ENCODE measurements at regions of chr17 and their contacts with region 1.

Region 1: DNA sequence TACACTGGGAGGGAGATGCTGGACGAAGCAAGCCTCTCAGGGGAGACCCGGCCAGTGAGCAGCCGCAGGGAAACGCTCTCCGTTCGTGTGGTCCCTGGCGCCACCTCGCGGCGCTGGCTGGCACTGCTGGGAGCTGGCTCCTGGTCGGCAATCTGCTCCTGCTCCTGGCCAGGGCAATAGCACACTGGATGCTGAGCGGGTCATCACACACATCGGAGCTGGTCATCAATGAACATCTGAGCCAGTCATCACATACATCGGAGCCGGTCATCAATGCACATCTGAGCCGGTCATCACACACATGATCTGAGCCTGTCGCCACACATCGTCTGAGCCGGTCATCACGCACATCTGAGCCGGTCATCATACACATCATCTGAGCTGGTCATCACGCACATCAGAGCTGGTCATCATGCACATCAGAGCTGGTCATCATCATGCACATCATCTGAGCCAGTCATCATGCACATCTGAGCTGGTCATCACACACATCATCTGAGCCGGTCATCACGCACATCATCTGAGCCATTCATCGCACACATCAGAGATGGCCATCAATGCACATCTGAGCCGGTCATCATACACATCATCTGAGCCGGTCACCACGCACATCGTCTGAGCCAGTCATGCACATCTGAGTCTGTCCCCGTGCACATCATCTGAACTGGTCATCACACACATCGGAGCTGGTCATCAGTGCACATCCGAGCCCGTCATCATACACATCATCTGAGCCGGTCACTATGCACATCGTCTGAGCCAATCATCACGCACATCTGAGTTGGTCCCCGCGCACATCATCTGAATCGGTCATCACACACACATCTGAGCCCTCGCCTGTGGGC is 217.3 kb downstream of the RBFOX3 start:
- DNase-seq: peak; percentile 74
- H3K4me3 ChIP-seq: no peak overlapping the region
- H3K27ac ChIP-seq: no peak overlapping the region
- H3K4me1 ChIP-seq: no peaks in the 10 kb centered on the region
- H3K27me3 ChIP-seq: peaks cover 92% of the 10 kb centered on the region
- CTCF ChIP-seq: peak; percentile 95

Region 2: DNA sequence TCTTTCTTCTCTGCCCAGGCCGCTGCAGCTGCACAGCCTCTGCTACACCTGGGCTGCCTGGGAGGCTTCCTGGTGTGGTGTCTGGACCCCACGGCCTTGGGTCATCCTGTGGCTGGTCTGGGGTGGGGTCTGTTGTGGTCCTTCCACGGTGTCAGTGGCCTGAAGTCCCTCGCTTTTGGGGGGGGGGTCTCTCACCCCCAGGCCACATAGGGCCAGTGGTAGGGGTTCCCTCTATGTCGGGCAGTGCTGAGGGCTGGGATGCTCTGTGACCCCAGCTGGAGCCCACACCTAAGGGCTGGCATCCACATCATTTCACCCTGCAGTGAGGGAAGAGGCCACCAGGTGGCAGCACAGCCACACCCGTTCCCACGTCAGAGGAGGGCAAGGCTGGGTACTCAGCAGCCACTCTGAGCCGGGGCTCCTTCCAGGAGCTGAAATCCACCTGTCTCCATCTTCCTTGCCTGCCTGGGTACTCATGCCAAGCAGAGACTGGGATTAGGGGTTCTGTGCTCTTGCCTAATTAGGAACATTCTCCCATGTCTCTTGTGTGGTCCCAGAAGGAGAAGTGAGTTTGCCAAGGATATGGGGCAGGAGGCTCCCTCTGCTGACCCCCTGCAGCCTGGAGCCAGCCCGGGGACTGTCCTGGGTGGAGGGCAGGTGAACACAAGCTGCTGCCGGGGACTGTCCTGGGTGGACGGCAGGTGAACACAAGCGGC is 306.0 kb before region 1 on chr17:
- CTCF ChIA-PET with region 1: interaction called, 36 read pairs
- POLR2A ChIA-PET with region 1: no interaction called
- intact Hi-C with region 1: loop called (anchors 1 kb)
- DNase-seq: peak; percentile 70
- H3K4me3 ChIP-seq: no peak overlapping the region
- H3K27ac ChIP-seq: no peak overlapping the region
- H3K4me1 ChIP-seq: no peaks in the 10 kb centered on the region
- H3K27me3 ChIP-seq: no peaks in the 10 kb centered on the region
- CTCF ChIP-seq: peak; percentile 92

Region 3: DNA sequence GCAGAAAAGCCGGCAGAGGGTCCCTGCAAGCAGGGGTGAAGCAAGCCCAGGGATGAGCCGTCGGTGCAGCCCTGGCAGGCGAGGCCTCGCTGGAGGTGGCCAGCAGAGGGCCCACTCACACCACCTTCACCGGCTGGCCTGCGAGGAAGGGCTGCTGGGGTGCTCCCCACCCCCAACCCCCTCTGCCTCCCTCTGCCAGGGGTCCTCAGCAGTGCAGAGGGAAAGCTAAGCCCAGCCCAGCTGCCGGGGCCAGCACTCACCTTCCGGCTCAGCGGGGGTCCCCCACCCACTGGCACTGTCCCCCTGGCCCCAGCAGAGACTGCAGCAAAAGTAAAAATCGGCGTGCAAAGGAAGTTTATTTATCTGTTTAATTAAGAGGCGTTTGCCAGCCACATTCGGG is 205.5 kb before region 1 on chr17:
- CTCF ChIA-PET with region 1: interaction called, 5 read pairs
- POLR2A ChIA-PET with region 1: no interaction called
- intact Hi-C with region 1: loop called (anchors 2 kb)
- DNase-seq: peak; percentile 43
- H3K4me3 ChIP-seq: no peak overlapping the region
- H3K27ac ChIP-seq: no peak overlapping the region
- H3K4me1 ChIP-seq: no peaks in the 10 kb centered on the region
- H3K27me3 ChIP-seq: peaks cover 98% of the 10 kb centered on the region
- CTCF ChIP-seq: peak; percentile 64

Region 4: GRCh38 chr17:79325709-79326430 is 67.7 kb before region 1 on chr17:
- CTCF ChIA-PET with region 1: no interaction called
- POLR2A ChIA-PET with region 1: no interaction called
- intact Hi-C with region 1: no loop called
- DNase-seq: peak; percentile 40
- H3K4me3 ChIP-seq: no peak overlapping the region
- H3K27ac ChIP-seq: no peak overlapping the region
- H3K4me1 ChIP-seq: no peaks in the 10 kb centered on the region
- H3K27me3 ChIP-seq: peaks cover 97% of the 10 kb centered on the region
- CTCF ChIP-seq: no peak

Region 5: DNA sequence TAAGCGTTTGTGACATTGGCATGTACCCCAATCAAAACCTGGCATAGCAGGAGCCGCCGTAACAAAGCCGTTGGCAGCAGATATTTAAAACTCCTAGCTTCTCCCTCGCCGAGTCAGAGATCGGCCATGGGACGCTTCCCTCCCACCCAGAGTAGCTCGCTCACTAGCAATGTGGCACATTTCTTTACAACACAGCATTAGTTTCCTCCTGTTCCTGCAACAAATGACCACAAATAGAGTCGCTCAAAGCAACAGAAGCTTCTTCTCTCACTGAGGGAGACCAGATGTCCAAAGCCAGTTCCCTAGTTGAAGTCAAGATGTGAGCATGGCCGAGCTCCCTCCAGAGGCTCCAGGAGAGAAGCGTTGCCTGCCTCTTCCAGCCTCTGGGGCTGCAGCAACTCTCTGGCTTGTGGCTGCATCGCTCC is 110.6 kb after region 1 on chr17:
- CTCF ChIA-PET with region 1: interaction called, 12 read pairs
- POLR2A ChIA-PET with region 1: no interaction called
- intact Hi-C with region 1: no loop called
- DNase-seq: no peak
- H3K4me3 ChIP-seq: no peak overlapping the region
- H3K27ac ChIP-seq: no peak overlapping the region
- H3K4me1 ChIP-seq: no peaks in the 10 kb centered on the region
- H3K27me3 ChIP-seq: peaks cover 47% of the 10 kb centered on the region
- CTCF ChIP-seq: no peak

Region 6: GRCh38 chr17:79707931-79708891 is 314.6 kb after region 1 on chr17:
- CTCF ChIA-PET with region 1: no interaction called
- POLR2A ChIA-PET with region 1: no interaction called
- intact Hi-C with region 1: loop called (anchors 10 kb)
- DNase-seq: peak; percentile 55
- H3K4me3 ChIP-seq: peak overlapping the region; percentile 23
- H3K27ac ChIP-seq: no peak overlapping the region
- H3K4me1 ChIP-seq: no peaks in the 10 kb centered on the region
- H3K27me3 ChIP-seq: no peaks in the 10 kb centered on the region
- CTCF ChIP-seq: peak; percentile 79